SK-N-SH (cell line): ENCODE measurements at regions of chr1 and their contacts with region 1.

Region 1: GRCh38 chr1:55375617-55376258 is 160.6 kb upstream of the USP24 start:
- DNase-seq: peak; percentile 65
- H3K4me3 ChIP-seq: peak overlapping the region in 1 of 2 experiments; percentile 5; a peak in 1 of 4 replicates
- H3K27ac ChIP-seq: peak overlapping the region in 1 of 2 experiments; percentile 62; a peak in 1 of 4 replicates
- H3K4me1 ChIP-seq: peaks cover 0 to 7% of the 10 kb centered on the region in 2 experiments; a peak in 1 of 4 replicates
- H3K27me3 ChIP-seq: no peaks in the 10 kb centered on the region
- CTCF ChIP-seq: peak; percentile 88
- EP300 ChIP-seq: no peak
- RAD21 ChIP-seq: peak; percentile 77

Region 2: DNA sequence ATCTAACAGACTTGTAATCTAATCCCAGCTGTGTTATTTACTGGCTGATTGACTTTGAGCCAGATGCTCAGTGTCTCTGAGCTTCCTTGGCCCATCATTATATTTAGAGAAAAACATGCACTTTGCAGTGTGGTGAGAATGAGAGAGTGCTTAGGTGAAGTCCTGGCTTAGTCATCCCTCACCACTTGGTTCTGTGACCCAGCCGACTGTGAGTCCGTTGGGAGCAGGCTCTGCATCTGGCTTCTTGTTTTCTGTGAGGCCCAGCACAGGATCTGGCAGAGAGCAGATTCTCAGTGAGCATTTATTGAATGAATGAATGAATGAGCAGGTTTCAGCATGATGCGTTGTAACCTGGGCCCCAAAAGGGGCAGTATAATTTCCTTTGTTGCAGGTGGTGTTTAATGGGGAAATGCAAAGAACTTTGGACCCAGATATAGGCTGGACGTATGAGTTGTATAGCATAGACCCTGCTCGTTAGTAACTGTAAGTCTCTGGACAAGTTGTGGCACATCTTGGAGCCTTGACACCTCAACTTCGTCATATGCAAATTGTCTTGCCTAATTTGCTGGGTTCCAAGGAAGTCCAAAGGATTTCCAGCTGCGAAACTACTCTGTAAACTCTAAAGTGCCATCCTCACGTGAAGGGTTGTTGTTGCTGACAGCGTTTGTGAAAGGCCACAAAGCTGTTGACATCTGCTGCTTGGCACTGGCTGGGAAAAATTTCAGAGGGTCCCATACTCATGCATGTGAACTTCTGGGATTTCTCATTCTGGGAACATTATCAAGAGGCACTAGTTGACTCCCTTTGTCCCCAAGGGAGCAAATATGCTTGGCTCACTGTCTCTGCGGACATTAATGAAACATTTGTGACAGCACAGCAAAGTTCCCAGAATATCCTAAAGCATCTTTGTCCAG is 21.8 kb before region 1 on chr1:
- CTCF ChIA-PET with region 1: interaction called, 11 read pairs
- POLR2A ChIA-PET with region 1: no interaction called
- DNase-seq: no peak
- H3K4me3 ChIP-seq: no peak overlapping the region
- H3K27ac ChIP-seq: no peak overlapping the region
- H3K4me1 ChIP-seq: no peaks in the 10 kb centered on the region
- H3K27me3 ChIP-seq: no peaks in the 10 kb centered on the region
- CTCF ChIP-seq: no peak
- EP300 ChIP-seq: no peak
- RAD21 ChIP-seq: no peak

Region 3: DNA sequence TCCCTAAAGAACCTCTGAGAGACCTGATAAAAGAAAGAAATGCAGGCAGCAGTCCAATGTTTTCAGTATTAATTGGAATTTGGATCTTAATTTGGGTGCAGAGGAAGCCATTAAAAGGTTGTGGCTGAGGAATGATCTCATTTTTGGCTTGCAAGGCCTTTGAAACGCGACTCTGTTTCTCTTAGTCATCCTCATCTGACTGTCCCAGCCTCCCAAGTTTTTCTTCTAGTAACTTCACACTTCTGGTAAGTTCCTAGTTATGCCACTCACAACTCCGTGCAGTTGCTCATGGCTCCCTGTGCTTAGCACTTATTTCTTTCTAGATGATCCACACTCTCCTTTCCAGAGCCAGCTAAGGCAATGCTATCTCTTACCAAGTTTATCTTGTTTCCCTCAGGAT is 13.2 kb before region 1 on chr1:
- CTCF ChIA-PET with region 1: interaction called, 38 read pairs
- POLR2A ChIA-PET with region 1: interaction called, 3 read pairs
- DNase-seq: no peak
- H3K4me3 ChIP-seq: no peak overlapping the region
- H3K27ac ChIP-seq: no peak overlapping the region
- H3K4me1 ChIP-seq: peaks cover 0 to 5% of the 10 kb centered on the region in 2 experiments; a peak in 1 of 4 replicates
- H3K27me3 ChIP-seq: no peaks in the 10 kb centered on the region
- CTCF ChIP-seq: no peak
- EP300 ChIP-seq: no peak
- RAD21 ChIP-seq: no peak

Region 4: GRCh38 chr1:55640708-55641473 is 265.2 kb after region 1 on chr1:
- CTCF ChIA-PET with region 1: interaction called, 10 read pairs
- POLR2A ChIA-PET with region 1: no interaction called
- DNase-seq: peak; percentile 57
- H3K4me3 ChIP-seq: peak overlapping the region in 1 of 2 experiments; percentile 3; a peak in 1 of 4 replicates
- H3K27ac ChIP-seq: peak overlapping the region; percentile 17 to 100; a peak in 3 of 4 replicates
- H3K4me1 ChIP-seq: peaks cover 0 to 54% of the 10 kb centered on the region in 2 experiments; a peak in 2 of 4 replicates
- H3K27me3 ChIP-seq: no peaks in the 10 kb centered on the region
- CTCF ChIP-seq: no peak
- EP300 ChIP-seq: peak in 1 of 2 experiments; percentile 99; a peak in 2 of 4 replicates
- RAD21 ChIP-seq: peak; percentile 29; the same call in 1 of the 2 replicates

Region 5: DNA sequence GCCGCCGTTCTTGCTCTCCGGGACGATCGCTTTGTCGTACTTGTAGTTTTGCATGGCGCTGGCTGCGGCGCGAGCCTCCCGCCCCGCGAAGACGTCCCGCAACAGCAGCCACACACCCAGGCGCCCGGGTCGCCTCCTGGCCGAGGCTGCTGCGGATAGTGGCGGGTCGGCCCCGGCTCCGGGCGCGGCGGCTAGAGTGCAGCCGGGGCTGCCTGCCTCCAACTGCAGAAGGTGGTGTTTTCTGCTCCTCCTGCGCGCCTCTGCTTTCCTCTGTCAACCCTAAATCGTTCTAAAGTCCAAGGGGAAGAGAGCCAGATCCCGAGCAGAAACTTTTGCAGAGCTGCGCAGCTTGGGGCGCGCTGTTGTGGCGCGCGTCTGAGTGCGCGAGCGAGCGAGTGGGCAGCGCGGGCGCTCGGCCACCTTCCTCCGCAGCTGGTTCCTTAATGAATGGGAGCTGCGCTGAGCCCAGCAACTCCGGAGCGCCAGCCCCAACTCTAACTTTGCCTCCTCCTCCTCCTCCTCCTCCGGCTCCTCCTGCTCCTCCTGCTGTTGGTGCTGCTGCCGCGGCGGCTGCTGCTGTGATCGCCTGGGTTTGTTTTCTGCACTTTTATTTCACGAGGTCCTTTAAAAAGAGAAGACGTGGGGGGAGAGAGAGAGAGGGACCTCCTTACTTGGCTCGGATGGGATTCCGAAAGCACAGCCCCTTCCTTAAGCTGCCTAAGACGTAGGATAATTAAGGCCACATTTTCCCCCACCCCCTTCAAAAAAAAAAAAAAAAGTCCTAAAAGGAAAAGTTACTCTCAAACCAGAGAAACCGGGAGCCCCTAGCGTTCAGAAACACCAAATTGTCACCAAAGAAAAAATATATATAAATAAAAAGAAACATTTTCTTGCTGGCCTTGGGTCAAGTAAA is 1203.5 kb after region 1 on chr1 and contains the start of gene PLPP3:
- CTCF ChIA-PET with region 1: interaction called, 21 read pairs
- POLR2A ChIA-PET with region 1: no interaction called
- DNase-seq: peak; percentile 81
- H3K4me3 ChIP-seq: peak within 1 kb of the TSS; percentile 87 to 95
- H3K27ac ChIP-seq: peak within 1 kb of the TSS; percentile 81 to 98
- H3K4me1 ChIP-seq: peaks cover 0 to 11% of the 10 kb centered on the region in 2 experiments; a peak in 2 of 4 replicates
- H3K27me3 ChIP-seq: no peaks in the 10 kb centered on the region
- CTCF ChIP-seq: peak; percentile 70
- EP300 ChIP-seq: no peak; a peak in 2 of 4 replicates
- RAD21 ChIP-seq: peak; percentile 68
- polyA plus RNA-seq, gene PLPP3: 32.2 and 38.1 TPM in 2 replicates